Activated CD4-positive, alpha-beta memory T cell treated with anti-CD3 and anti-CD28 coated beads for 36 hours (primary cell): ENCODE measurements at regions of chrX and their contacts with region 1.

Region 1: DNA sequence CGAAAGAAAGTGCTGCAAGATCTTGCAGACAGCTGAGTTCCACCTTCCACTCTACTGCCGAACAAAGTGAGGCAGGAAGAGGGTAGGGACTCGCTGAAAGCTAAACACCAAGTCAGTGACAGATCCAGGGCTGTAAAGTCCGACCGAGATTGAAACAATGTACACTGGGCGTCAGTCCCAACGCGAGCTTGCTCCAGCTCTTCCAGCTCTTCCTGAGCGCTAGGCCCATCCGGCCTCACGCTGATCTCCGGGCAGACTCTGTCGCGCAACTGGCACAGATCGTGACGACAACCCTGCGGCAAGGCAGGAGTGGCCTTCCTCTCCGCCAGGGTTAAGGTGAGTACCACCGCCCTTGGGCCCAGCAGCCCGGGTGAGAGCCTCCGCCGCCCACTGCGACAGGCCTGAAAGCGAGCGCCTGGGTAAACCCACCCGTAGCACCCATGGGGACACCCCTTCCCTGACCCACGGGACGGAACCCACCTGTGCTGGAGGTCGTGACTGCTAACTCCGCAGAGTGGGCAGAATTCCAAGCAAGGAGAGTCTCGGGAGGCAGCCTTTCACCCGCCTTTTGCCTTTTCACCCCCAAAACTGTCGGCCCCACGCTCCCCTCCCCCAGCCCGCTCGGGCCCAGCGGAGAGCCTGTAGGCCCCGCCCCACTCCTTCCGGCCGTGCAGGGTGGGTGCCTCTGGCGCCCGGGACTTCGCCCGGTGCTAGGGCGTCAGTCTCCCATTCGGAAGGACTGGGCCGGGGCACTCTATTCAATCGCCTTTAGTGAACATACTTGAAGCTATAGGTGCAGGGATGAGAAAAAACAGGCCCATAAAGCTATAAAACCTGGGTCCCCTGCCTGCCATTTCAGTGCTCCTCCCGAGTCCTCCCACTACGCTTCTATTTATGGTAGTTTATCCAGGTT is at the start of gene TMLHE:
- DNase-seq: peak; percentile 75
- H3K4me3 Mint-ChIP-seq: peak within 1 kb of the TSS; percentile 91
- H3K27ac Mint-ChIP-seq: peak within 1 kb of the TSS; percentile 95
- H3K4me1 Mint-ChIP-seq: peaks cover 29% of the 10 kb centered on the region
- H3K27me3 Mint-ChIP-seq: no peaks in the 10 kb centered on the region
- total RNA-seq, gene TMLHE: 13.3 to 13.9 TPM

Region 2: GRCh38 chrX:155632386-155633100 is 20.0 kb after region 1 on chrX:
- CTCF ChIA-PET with region 1: no interaction called
- POLR2A ChIA-PET with region 1: no interaction called
- intact Hi-C with region 1: loop called (anchors 1 kb)
- DNase-seq: peak; percentile 19
- H3K4me3 Mint-ChIP-seq: peak overlapping the region; percentile 53
- H3K27ac Mint-ChIP-seq: peak overlapping the region; percentile 69
- H3K4me1 Mint-ChIP-seq: peaks cover 8% of the 10 kb centered on the region
- H3K27me3 Mint-ChIP-seq: no peaks in the 10 kb centered on the region